ENCODE measurements at regions of chr7 and their contacts with region 1.

Region 1: GRCh38 chr7:99876491-99876890 is 342 bp downstream of the OR2AE1 start:
- ATAC-seq: no peak
- H3K4me3 ChIP-seq: no peak overlapping the region
- H3K27ac ChIP-seq: no peak overlapping the region
- H3K4me1 ChIP-seq: no peaks in the 10 kb centered on the region

Region 2: DNA sequence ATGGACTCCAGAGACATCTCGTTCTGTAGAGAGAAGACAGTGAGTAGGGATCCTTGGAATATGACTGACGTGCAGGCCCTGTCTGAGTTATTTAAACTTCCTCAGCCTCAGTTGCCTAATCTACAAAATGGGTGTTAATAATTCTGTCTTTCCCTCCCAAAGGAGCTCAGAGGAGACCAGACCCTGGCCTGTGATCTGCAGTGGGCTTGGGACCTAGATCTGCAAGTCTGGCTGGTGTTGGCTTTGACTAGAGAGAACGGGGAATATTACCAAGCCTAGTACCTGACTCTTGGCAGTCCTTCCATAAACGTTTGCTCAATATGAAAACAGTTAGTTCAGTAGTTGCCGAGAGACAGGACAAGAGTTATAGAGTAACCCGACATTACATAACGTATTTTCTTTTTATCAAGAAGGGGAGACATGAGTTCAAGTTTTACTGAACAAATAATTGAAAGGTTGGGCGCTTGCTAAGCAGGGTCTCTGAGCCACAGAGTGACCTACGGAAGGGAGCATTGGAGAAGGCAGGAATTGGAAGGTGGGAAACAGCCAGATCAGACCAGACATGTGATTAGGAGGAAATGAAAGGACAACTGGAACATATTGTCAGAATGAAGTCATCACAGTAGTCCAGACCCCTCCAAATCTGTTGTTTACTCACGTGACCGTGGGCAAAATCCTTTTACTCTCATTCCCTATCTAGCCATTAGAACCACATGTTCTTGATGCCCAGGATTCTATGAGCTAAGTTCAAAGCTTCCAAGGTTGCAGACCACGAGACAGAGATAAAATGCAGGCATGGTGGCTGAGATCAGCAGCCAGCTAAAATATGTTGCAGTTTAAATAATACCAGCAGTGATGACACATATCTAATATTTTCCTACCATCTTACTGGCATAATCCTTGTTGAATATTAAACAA is 81.6 kb before region 1 on chr7:
- in situ Hi-C with region 1: loop called in 1 of 9 experiments (anchors 10 kb)
- ATAC-seq: no peak
- H3K4me3 ChIP-seq: no peak overlapping the region
- H3K27ac ChIP-seq: no peak overlapping the region
- H3K4me1 ChIP-seq: no peaks in the 10 kb centered on the region